PC-9 (cell line): ENCODE measurements at regions of chr1 and their contacts with region 1.

Region 1: DNA sequence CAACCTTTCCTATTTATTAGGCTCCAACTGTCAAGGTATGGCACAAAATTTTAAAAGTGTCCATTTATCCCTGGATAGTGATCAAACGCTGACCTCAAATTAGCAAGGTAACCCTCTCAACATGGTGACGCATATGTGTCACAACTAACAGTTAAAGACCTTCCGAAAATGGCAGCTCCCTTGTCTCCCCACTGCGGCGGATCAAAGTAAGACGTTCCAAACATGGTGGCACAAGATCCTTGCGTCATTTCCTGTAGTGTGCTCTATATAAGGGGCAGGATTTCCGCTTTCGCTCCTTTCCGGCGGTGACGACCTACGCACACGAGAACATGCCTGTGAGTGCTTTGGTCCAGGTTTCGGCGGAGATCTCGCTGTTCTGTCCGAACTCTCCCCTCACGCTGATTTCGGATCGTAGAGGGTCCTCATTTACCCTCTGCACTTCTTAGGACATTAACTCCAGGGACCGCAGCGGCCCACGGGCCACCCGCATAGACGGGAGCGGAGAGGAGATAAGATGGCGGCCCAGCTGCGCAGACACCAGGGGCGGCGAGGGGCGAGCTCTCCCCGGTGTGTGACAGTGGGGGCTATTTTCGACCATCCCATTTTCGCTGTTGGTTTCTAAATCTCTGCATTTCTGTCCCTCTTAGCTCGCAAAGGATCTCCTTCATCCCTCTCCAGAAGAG is at the start of gene RPS27:
- DNase-seq: peak; percentile 81 to 93
- H3K4me3 ChIP-seq: peak within 1 kb of the TSS; percentile 92
- H3K27ac ChIP-seq: peak within 1 kb of the TSS; percentile 77
- H3K4me1 ChIP-seq: peaks cover 14% of the 10 kb centered on the region
- H3K27me3 ChIP-seq: no peaks in the 10 kb centered on the region
- CTCF ChIP-seq: no peak
- total RNA-seq, gene RPS27: 898 and 1,409 TPM in 2 replicates

Region 2: GRCh38 chr1:153352523-153352922 is 638.1 kb before region 1 on chr1:
- CTCF ChIA-PET with region 1: no interaction called
- POLR2A ChIA-PET with region 1: no interaction called
- intact Hi-C with region 1: loop called (anchors 1 kb)
- DNase-seq: peak; percentile 57 to 61
- H3K4me3 ChIP-seq: no peak overlapping the region
- H3K27ac ChIP-seq: no peak overlapping the region
- H3K4me1 ChIP-seq: peaks cover 27% of the 10 kb centered on the region
- H3K27me3 ChIP-seq: peaks cover 8% of the 10 kb centered on the region; the same call in 1 of the 2 replicates
- CTCF ChIP-seq: peak; percentile 93

Region 3: GRCh38 chr1:153670859-153671627 is 319.6 kb before region 1 on chr1 and contains the start of gene ILF2:
- CTCF ChIA-PET with region 1: interaction called, 7 read pairs
- POLR2A ChIA-PET with region 1: no interaction called
- intact Hi-C with region 1: loop called (anchors 5 kb)
- DNase-seq: peak; percentile 94 to 100
- H3K4me3 ChIP-seq: peak within 1 kb of the TSS; percentile 75
- H3K27ac ChIP-seq: peak within 1 kb of the TSS; percentile 72
- H3K4me1 ChIP-seq: peaks cover 13% of the 10 kb centered on the region
- H3K27me3 ChIP-seq: no peaks in the 10 kb centered on the region
- CTCF ChIP-seq: 0 out of 2 replicates have a peak, but pooled peaks have one; percentile 14
- total RNA-seq, gene ILF2: 131 and 145 TPM in 2 replicates

Region 4: DNA sequence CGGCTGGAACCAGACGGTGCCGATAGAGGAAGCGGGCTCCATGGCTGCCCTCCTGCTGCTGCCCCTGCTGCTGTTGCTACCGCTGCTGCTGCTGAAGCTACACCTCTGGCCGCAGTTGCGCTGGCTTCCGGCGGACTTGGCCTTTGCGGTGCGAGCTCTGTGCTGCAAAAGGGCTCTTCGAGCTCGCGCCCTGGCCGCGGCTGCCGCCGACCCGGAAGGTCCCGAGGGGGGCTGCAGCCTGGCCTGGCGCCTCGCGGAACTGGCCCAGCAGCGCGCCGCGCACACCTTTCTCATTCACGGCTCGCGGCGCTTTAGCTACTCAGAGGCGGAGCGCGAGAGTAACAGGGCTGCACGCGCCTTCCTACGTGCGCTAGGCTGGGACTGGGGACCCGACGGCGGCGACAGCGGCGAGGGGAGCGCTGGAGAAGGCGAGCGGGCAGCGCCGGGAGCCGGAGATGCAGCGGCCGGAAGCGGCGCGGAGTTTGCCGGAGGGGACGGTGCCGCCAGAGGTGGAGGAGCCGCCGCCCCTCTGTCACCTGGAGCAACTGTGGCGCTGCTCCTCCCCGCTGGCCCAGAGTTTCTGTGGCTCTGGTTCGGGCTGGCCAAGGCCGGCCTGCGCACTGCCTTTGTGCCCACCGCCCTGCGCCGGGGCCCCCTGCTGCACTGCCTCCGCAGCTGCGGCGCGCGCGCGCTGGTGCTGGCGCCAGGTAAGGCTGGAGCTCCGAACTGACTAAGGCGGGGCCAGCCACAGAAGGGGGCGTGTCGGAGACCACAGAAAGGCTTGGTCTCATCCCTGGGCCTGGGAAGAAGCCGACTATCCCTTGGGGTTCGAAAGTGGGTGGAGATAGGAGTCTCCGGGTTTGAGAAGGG is 214.9 kb before region 1 on chr1:
- CTCF ChIA-PET with region 1: no interaction called
- POLR2A ChIA-PET with region 1: no interaction called
- intact Hi-C with region 1: loop called (anchors 5 kb)
- DNase-seq: peak; percentile 58 to 76
- H3K4me3 ChIP-seq: peak overlapping the region; percentile 89
- H3K27ac ChIP-seq: no peak overlapping the region
- H3K4me1 ChIP-seq: 0 out of 2 replicates have a peak, but pooled peaks cover 12% of the 10 kb centered on the region
- H3K27me3 ChIP-seq: no peaks in the 10 kb centered on the region
- CTCF ChIP-seq: no peak

Region 5: GRCh38 chr1:153903841-153904455 is 86.7 kb before region 1 on chr1:
- CTCF ChIA-PET with region 1: no interaction called
- POLR2A ChIA-PET with region 1: interaction called, 11 read pairs
- intact Hi-C with region 1: no loop called
- DNase-seq: no peak
- H3K4me3 ChIP-seq: no peak overlapping the region
- H3K27ac ChIP-seq: no peak overlapping the region
- H3K4me1 ChIP-seq: no peaks in the 10 kb centered on the region; the same call in 1 of the 2 replicates
- H3K27me3 ChIP-seq: no peaks in the 10 kb centered on the region
- CTCF ChIP-seq: no peak

Region 6: DNA sequence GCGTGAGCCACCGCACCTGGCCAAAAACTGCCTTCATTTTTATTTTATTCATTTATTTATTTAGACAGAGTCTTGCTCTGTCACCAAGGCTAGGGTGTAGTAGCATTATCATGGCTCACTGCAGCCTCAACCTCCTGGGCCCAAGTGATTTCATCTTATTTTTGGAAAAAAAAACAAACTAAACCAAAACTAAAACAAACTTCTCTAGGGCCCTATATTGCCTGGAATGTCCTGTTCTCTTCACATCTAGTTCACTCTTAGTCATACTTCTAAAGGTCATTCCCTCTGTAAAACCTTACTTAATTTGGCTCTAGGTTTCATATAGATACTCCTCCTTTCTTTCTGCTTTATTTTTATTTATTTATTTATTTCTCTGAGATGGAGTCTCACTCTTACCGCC is 15.5 kb after region 1 on chr1:
- CTCF ChIA-PET with region 1: no interaction called
- POLR2A ChIA-PET with region 1: interaction called, 13 read pairs
- intact Hi-C with region 1: no loop called
- DNase-seq: no peak
- H3K4me3 ChIP-seq: no peak overlapping the region
- H3K27ac ChIP-seq: no peak overlapping the region
- H3K4me1 ChIP-seq: peaks cover 20% of the 10 kb centered on the region
- H3K27me3 ChIP-seq: no peaks in the 10 kb centered on the region
- CTCF ChIP-seq: no peak

Region 7: DNA sequence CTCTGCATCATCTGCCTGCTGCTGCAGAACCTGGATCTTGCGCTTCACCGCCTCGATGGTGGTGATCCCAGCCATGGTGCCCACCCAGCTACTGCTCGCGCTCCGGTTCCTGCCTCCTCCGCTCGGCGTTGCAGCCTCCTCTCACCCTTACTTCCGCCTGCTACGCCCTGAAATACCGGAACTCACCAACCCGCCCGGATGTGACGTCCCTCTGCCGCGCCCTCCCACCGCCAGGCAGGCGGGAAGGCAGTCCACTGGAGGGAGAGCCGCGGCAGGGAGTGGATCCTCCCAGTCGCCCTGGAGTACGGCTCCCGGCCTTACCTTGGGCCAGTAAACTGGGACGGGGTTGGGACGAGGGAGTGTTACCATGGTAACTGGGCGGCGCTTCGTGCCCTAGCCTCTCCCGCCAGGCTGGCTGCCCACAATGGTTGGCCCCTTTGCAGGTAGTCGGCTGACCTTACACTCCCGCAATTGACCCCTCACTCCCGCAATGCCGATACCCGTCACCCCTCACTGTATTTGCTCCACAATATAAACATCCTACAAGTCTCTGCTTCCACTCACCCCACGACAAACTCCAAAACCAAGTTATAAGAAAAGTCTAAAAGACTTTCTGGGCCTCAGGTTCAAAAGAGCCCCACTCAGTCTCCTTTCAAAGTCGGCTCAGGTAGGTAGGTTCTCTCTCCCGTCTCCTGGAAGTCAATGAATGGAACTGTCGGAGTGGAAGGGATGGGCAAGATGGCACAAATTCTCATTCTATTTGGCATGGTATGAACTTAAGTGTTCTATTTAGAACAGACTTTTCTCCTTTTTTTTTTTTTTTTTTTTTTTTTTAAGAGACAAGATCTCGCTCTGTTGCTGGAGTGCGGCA is 192.7 kb after region 1 on chr1:
- CTCF ChIA-PET with region 1: no interaction called
- POLR2A ChIA-PET with region 1: interaction called, 11 read pairs
- intact Hi-C with region 1: loop called (anchors 2 kb)
- DNase-seq: peak; percentile 97 to 98
- H3K4me3 ChIP-seq: peak overlapping the region; percentile 83
- H3K27ac ChIP-seq: peak overlapping the region; percentile 74
- H3K4me1 ChIP-seq: peaks cover 24% of the 10 kb centered on the region
- H3K27me3 ChIP-seq: no peaks in the 10 kb centered on the region
- CTCF ChIP-seq: no peak

Region 8: DNA sequence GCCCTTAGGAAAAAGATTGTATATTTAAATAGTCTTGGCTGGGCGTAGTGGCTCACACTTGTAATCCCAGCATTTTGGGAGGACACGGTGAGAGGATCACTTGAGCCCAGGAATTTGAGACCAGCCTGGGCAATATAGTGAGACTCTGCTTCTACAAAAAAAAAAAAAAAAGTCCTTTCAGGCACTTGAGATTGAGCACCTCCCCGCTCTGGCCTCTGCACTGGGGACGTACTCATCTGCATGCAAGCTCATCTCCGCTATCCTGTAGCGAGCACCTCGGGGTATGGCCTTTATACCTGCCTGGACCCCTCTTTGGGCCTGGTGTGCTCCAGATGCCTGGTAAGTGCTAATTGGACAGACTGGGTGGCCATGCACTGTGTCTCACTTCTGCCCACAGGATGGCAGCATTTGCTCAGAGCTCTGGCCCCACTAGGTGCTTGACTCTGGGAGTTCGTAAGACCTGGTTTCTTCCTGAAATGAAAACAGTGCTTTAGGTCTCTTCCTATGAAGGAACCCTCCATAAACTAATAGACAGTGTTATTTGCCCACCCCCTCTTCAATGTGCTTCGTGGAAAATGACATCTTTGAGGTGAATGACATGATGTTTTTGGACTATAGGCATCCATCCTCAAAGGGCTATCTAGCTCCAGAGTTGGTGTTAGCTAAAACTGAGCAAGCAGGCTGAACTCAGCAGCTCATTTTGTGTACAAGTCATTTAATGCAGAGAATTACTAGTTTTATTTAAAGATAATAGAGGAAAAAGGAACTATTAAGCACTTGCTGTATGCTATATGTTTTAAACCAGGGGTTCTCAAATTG is 679.1 kb after region 1 on chr1:
- CTCF ChIA-PET with region 1: no interaction called
- POLR2A ChIA-PET with region 1: no interaction called
- intact Hi-C with region 1: no loop called
- DNase-seq: peak; percentile 62 to 70
- H3K4me3 ChIP-seq: no peak overlapping the region
- H3K27ac ChIP-seq: no peak overlapping the region
- H3K4me1 ChIP-seq: no peaks in the 10 kb centered on the region
- H3K27me3 ChIP-seq: peaks cover 9% of the 10 kb centered on the region; the same call in 1 of the 2 replicates
- CTCF ChIP-seq: peak; percentile 84